Psoas muscle (tissue), 8 donors: ENCODE measurements at regions of chr4 and their contacts with region 1.

Region 1: GRCh38 chr4:25159884-25160713 is at the start of gene SEPSECS:
- DNase-seq: peak; percentile 97 to 98
- ATAC-seq: peak; percentile 92 to 97 (median 94)
- H3K4me3 ChIP-seq: peak within 1 kb of the TSS; percentile 98
- H3K27ac ChIP-seq: peak within 1 kb of the TSS; percentile 98
- H3K4me1 ChIP-seq: peaks cover 27% of the 10 kb centered on the region
- H3K27me3 ChIP-seq: no peaks in the 10 kb centered on the region
- CTCF ChIP-seq: no peak
- total RNA-seq, gene SEPSECS: 3.4 to 5.7 (median 4.4) TPM

Region 2: DNA sequence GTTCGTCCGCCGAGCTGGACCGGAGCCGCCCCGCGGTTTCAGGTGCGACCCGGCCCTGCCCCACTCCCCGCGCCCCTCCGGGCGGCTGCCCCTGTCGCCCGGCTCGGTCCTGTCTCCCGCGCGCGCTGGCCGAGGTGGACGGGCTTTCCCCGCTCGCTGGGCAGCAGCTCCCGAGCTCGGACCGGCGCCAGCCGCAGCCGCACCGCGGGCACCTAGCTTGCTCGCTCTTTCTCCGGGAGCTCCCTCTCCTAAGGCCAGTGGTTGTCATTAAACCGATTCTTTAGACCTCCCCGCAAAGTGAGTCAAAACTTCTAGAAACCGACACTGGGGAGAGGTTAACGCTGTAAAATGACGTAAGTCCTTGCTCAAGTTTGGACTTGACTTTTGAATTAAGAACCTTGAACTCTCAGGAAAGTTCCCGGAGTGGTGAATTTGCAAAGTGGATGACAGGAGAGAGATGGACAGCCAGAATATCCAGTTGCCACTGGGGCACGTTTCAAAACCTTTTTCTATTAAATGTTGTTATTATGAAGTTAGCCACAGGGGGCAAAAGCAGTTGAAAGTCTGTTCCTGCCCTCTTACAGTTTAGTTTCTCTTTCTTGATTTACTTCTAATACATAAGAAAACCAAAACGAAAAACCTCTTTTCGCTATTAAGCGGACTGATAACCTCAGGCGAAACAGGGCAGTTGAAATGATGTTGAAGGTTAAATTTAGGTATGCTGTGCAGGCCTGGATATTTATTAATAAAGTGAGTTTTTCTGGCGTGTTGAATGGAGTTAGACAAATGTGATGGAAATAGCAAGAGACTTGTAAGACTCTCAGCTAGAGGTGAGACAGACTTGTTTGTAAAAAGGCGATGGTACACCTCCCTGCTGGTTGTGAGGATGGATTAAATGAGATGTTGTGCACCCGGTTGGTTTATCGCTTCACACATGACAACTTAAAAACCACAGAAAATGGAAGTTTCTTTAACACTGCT is 74.6 kb after region 1 on chr4:
- intact Hi-C with region 1: loop called in 1 of 2 experiments (anchors 2 kb)
- DNase-seq: peak; percentile 44 to 77
- ATAC-seq: peak; percentile 62 to 73 (median 68)
- H3K4me3 ChIP-seq: peak overlapping the region; percentile 99
- H3K27ac ChIP-seq: peak overlapping the region; percentile 93
- H3K4me1 ChIP-seq: peaks cover 9% of the 10 kb centered on the region
- H3K27me3 ChIP-seq: no peaks in the 10 kb centered on the region
- CTCF ChIP-seq: peak; percentile 54

Region 3: GRCh38 chr4:25312496-25313200 is 152.5 kb after region 1 on chr4 and contains the start of gene ZCCHC4:
- intact Hi-C with region 1: loop called (anchors 5 to 10 kb)
- DNase-seq: peak; percentile 86 to 92
- ATAC-seq: peak; percentile 100
- H3K4me3 ChIP-seq: peak within 1 kb of the TSS; percentile 90
- H3K27ac ChIP-seq: peak within 1 kb of the TSS; percentile 70
- H3K4me1 ChIP-seq: peaks cover 9% of the 10 kb centered on the region
- H3K27me3 ChIP-seq: no peaks in the 10 kb centered on the region
- CTCF ChIP-seq: peak; percentile 97
- total RNA-seq, gene ZCCHC4: 4.4 to 7.9 (median 6.2) TPM

Region 4: DNA sequence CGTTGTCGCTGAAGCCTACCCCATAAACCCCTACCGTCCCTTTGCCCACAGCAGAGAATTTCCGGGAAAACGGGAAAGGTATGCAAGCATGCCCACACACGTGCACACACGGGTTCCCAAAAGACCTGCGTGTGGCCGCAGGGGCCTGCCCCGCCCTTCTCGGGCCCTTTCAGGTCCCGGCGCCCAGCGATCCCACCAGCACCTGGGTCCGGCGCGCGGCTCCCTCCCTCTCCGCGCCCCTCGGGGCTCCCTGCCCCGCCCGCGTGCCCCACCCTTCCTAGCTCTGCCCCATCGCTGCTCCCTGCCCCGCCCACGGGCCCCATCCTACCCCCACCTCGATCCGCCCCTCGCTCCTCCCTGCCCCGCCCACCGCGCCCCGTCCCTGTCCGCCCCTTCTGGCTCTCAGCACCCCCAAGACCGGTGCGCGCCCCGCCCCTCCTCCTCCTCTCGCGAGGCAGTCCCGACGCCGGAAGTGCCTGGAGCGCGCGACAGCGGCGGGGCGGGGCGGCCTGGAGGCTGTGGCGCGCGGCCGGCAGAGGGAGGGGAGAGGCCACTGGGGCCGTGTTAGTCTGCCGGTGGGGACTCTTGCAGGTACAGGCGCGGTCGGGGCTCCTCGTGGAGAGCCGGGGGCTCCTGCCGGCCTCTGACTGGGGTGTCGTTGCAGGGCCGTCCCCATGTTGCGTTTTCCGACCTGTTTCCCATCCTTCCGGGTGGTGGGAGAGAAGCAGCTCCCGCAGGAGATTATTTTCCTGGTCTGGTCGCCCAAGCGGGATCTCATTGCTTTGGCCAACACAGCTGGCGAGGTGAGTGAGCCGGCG is 216.9 kb after region 1 on chr4 and contains the start of gene ANAPC4:
- intact Hi-C with region 1: loop called in 1 of 2 experiments (anchors 10 kb)
- DNase-seq: peak; percentile 97
- ATAC-seq: peak; percentile 94 to 98 (median 97)
- H3K4me3 ChIP-seq: peak within 1 kb of the TSS; percentile 98
- H3K27ac ChIP-seq: peak within 1 kb of the TSS; percentile 81
- H3K4me1 ChIP-seq: peaks cover 19% of the 10 kb centered on the region
- H3K27me3 ChIP-seq: no peaks in the 10 kb centered on the region
- CTCF ChIP-seq: no peak
- total RNA-seq, gene ANAPC4: 9.0 to 14.7 (median 12.6) TPM